PC-9 (cell line): ENCODE measurements at regions of chr9 and their contacts with region 1.

Region 1: GRCh38 chr9:96217754-96218693 is 84.0 kb downstream of the HSD17B3 start:
- DNase-seq: peak; percentile 39 to 78
- H3K4me3 ChIP-seq: no peak overlapping the region
- H3K27ac ChIP-seq: no peak overlapping the region
- H3K4me1 ChIP-seq: no peaks in the 10 kb centered on the region
- H3K27me3 ChIP-seq: peaks cover 24% of the 10 kb centered on the region
- CTCF ChIP-seq: peak; percentile 85

Region 2: GRCh38 chr9:94681508-94681907 is 1536.5 kb before region 1 on chr9:
- CTCF ChIA-PET with region 1: no interaction called
- POLR2A ChIA-PET with region 1: no interaction called
- intact Hi-C with region 1: loop called (anchors 5 kb)
- DNase-seq: peak; percentile 51 to 59
- H3K4me3 ChIP-seq: no peak overlapping the region
- H3K27ac ChIP-seq: no peak overlapping the region
- H3K4me1 ChIP-seq: 0 out of 2 replicates have a peak, but pooled peaks cover 6% of the 10 kb centered on the region
- H3K27me3 ChIP-seq: no peaks in the 10 kb centered on the region
- CTCF ChIP-seq: peak; percentile 74

Region 3: DNA sequence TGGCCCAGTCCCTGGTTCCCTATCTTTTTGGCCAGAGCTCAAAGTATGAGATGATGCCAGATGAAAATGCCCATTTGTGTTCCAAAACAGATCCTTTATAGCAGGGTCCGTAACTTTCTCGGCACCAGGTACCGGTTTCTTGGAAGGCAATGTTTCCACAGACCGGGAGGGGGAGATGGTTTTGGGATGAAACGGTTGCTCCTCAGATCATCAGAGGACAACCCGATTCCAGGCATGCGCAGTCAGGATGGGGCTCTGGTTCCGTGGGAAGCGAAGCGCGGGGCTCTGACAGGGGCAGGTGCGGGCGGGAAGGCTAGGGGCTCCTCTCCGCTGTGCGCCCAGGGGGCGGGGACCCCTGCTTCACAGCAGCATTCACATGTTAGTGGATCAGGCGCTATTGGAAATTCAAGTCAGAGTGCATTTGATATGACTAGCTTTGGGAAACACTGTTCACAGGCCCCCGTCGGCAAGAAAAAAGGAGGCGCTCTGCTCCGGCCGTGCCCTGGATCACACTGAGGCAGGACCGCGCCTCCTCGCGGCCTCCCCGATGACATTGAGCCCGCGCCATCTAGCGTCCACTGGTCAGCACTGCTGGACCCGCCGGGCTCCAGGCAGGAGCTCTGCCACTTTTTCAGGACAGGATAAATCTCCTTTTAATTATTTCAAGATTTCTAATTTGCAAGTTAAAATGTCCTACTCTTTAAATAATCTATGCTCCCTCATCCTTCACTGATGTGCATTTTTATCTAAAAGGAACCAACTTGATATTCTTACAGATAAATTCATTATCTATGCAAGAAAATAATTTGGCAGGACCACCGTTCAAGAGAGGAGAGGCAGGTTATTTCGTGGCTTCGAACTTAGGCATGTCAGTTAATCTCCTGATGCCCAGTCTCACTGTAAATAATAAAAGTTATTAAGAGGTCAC is 1090.5 kb before region 1 on chr9:
- CTCF ChIA-PET with region 1: interaction called, 3 read pairs
- POLR2A ChIA-PET with region 1: interaction called, 6 read pairs
- intact Hi-C with region 1: loop called (anchors 1 kb)
- DNase-seq: peak; percentile 43 to 83
- H3K4me3 ChIP-seq: no peak overlapping the region
- H3K27ac ChIP-seq: no peak overlapping the region
- H3K4me1 ChIP-seq: no peaks in the 10 kb centered on the region
- H3K27me3 ChIP-seq: no peaks in the 10 kb centered on the region
- CTCF ChIP-seq: peak; percentile 89

Region 4: DNA sequence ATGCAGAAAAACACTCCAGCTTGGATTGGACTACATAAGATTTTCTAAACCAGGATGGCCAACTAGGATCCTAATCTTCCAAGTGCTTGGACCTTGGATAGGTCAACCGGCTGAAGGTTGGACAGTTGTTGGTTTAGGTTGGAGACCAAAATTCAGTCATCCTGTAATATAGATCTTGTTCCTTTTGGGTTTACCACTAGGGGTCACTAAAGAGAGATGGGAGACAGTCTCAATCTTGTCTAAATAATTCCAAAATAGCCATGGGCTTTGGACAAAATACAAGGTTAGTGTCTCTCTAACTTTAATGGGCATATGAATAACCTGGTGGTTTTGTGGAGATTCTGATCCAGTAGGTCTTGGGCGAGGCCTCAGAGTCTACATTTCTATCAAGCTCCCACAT is 491.3 kb before region 1 on chr9:
- CTCF ChIA-PET with region 1: interaction called, 11 read pairs
- POLR2A ChIA-PET with region 1: no interaction called
- intact Hi-C with region 1: loop called (anchors 10 kb)
- DNase-seq: no peak
- H3K4me3 ChIP-seq: no peak overlapping the region
- H3K27ac ChIP-seq: no peak overlapping the region
- H3K4me1 ChIP-seq: no peaks in the 10 kb centered on the region
- H3K27me3 ChIP-seq: peaks cover 47% of the 10 kb centered on the region; the same call in 1 of the 2 replicates
- CTCF ChIP-seq: peak; percentile 74

Region 5: DNA sequence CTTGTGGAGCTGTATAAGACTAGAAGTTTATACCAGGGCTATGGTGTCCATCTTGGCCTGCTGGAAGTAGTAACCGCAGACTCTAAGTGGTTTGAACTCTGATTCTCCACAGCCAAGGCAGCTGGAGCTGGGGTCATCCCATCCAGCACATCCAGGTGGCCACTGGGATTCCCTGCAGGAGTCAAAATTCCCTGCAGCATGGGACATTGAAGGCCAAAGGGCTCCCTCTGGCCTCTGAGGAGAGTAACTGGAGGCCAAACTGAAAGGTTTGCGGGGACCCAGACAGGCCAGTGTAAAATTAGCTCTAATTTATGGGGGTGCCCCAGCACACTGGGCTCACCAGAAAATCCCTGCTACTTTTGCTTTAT is 449.3 kb after region 1 on chr9:
- CTCF ChIA-PET with region 1: no interaction called
- POLR2A ChIA-PET with region 1: no interaction called
- intact Hi-C with region 1: loop called (anchors 2 kb)
- DNase-seq: no peak
- H3K4me3 ChIP-seq: no peak overlapping the region
- H3K27ac ChIP-seq: no peak overlapping the region
- H3K4me1 ChIP-seq: no peaks in the 10 kb centered on the region
- H3K27me3 ChIP-seq: no peaks in the 10 kb centered on the region
- CTCF ChIP-seq: no peak